ENCODE measurements at regions of chr12 and their contacts with region 1.

Region 1: DNA sequence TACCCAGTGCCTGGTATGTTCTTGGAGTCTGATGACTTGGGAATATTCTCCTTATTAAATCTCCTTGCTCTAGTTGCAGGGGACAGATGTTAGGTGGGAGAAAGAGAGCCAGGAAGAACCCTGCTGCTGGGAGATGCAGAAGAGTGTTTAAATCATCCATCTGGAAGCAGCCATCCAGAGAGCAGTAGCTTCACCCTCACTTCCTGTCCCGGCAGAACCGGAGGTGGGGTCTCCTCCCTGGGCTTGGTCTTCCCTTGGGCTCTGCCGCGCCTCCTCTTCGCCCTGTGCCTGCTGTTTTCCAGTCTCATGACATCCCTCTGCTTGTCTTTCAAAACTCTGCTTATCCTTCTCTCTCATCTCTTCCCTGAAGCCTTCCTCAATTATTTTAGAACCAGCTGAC is 15.6 kb downstream of the B4GALNT3 start:
- DNase-seq: no peak
- ATAC-seq: no peak
- H3K4me3 ChIP-seq: no peak overlapping the region
- H3K4me3 Mint-ChIP-seq: no peak overlapping the region
- H3K27ac ChIP-seq: no peak overlapping the region
- H3K27ac Mint-ChIP-seq: no peak overlapping the region
- H3K4me1 ChIP-seq: no peaks in the 10 kb centered on the region
- H3K4me1 Mint-ChIP-seq: no peaks in the 10 kb centered on the region
- H3K27me3 ChIP-seq: peaks cover 2 to 5% of the 10 kb centered on the region in 2 experiments
- H3K27me3 Mint-ChIP-seq: peaks cover 44% of the 10 kb centered on the region
- CTCF ChIP-seq: no peak

Region 2: GRCh38 chr12:422526-422925 is 52.8 kb before region 1 on chr12:
- CTCF ChIA-PET with region 1: no interaction called
- POLR2A ChIA-PET with region 1: no interaction called
- intact Hi-C with region 1: no loop called
- DNase-seq: no peak
- ATAC-seq: no peak
- H3K4me3 ChIP-seq: no peak overlapping the region
- H3K4me3 Mint-ChIP-seq: no peak overlapping the region
- H3K27ac ChIP-seq: no peak overlapping the region
- H3K27ac Mint-ChIP-seq: no peak overlapping the region
- H3K4me1 ChIP-seq: no peaks in the 10 kb centered on the region
- H3K4me1 Mint-ChIP-seq: no peaks in the 10 kb centered on the region
- H3K27me3 ChIP-seq: no peaks in the 10 kb centered on the region
- H3K27me3 Mint-ChIP-seq: no peaks in the 10 kb centered on the region
- CTCF ChIP-seq: no peak

Region 3: GRCh38 chr12:524225-524951 is 49.1 kb after region 1 on chr12:
- CTCF ChIA-PET with region 1: no interaction called
- POLR2A ChIA-PET with region 1: no interaction called
- intact Hi-C with region 1: loop called in 1 of 2 experiments (anchors 5 kb)
- DNase-seq: no peak
- ATAC-seq: no peak
- H3K4me3 ChIP-seq: no peak overlapping the region
- H3K4me3 Mint-ChIP-seq: no peak overlapping the region
- H3K27ac ChIP-seq: no peak overlapping the region
- H3K27ac Mint-ChIP-seq: no peak overlapping the region
- H3K4me1 ChIP-seq: no peaks in the 10 kb centered on the region
- H3K4me1 Mint-ChIP-seq: no peaks in the 10 kb centered on the region
- H3K27me3 ChIP-seq: peaks cover 0 to 4% of the 10 kb centered on the region in 2 experiments
- H3K27me3 Mint-ChIP-seq: peaks cover 7% of the 10 kb centered on the region
- CTCF ChIP-seq: no peak

Region 4: DNA sequence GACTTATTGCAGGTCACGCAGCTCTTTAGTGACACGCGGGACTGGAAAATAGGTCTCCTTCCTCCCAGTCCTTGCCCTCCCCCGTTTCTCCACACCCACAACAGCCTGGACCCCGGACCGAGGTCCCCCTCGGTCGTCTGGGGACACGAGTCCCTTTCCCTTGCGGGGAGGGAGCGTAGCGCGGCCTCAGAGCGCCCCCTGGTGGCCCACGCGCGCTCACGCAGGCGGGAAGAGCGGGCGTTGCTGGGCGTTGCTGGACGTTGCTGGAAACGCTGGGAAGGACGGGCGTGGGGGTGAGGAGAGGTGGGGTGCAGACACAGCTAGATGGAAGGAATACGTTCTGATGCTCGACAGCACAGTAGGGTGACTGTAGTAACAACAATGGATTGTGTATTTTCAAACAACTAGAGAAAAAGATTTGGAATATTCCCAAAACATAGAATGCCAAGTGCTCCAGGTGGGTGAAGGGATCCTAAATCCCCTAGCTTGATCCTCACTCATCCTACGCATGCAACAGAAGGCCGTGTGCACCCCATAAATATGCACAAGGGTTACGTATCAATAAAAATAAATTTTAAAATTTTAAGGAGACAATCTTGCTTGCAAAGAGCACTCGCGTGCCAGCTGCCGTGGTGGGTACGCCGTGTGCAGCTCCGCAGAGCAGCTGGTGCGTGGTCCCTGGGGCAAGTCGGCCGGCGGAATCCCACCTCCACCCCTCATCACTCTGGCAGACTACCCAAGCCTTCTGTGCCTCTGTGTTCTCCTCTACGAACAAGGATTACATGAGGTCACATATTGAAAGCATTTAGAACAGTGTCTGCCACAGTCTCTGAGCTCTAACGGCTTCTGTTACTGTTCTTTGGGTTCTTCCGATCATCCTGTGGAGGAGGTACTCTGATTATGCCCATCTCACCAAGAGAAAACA is 71.9 kb after region 1 on chr12:
- CTCF ChIA-PET with region 1: no interaction called
- POLR2A ChIA-PET with region 1: no interaction called
- intact Hi-C with region 1: no loop called
- DNase-seq: peak; percentile 39 to 84 (median 64)
- ATAC-seq: peak; percentile 80
- H3K4me3 ChIP-seq: no peak overlapping the region
- H3K4me3 Mint-ChIP-seq: no peak overlapping the region
- H3K27ac ChIP-seq: no peak overlapping the region
- H3K27ac Mint-ChIP-seq: no peak overlapping the region
- H3K4me1 ChIP-seq: peaks cover 30% of the 10 kb centered on the region
- H3K4me1 Mint-ChIP-seq: peaks cover 47% of the 10 kb centered on the region
- H3K27me3 ChIP-seq: peaks cover 4 to 8% of the 10 kb centered on the region in 2 experiments
- H3K27me3 Mint-ChIP-seq: peaks cover 12% of the 10 kb centered on the region
- CTCF ChIP-seq: peak; percentile 98

Measured in CD4-positive, alpha-beta T cell (primary cell).